Naive thymus-derived CD4-positive, alpha-beta T cell (primary cell): ENCODE measurements at regions of chr6 and their contacts with region 1.

Region 1: DNA sequence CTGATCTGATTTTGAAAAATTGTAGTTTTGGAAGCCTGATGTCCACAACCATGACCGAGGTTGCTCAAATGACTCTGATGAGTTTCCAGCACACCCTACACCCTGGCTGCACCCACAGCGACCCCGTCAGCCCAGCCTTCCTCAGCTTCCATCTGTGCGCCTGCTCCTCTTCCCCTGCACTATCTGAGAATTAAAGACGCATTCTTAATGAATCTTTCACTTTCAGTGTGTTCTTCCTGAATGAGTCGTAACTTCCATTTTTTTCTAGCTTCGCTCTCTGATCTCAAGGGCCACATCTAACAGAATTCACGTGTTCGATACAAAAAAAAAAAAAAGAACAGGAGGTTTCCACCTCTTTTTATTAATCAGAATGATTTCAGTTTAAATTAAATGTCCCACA is 21.3 kb upstream of the RREB1 start:
- DNase-seq: peak in 8 of 9 donors; percentile 10 to 62 (median 56)
- ATAC-seq: peak; percentile 79
- H3K4me3 ChIP-seq: peak overlapping the region; percentile 29
- H3K4me3 Mint-ChIP-seq: peak overlapping the region; percentile 77 to 93 (median 83)
- H3K27ac ChIP-seq: peak overlapping the region; percentile 58
- H3K27ac Mint-ChIP-seq: peak overlapping the region; percentile 62 to 95 (median 89)
- H3K4me1 ChIP-seq: peaks cover 20 to 27% of the 10 kb centered on the region in 2 donors
- H3K4me1 Mint-ChIP-seq: peaks cover 21 to 42% (median 39%) of the 10 kb centered on the region in 7 donors
- H3K27me3 ChIP-seq: no peaks in the 10 kb centered on the region
- H3K27me3 Mint-ChIP-seq: peaks cover 0 to 65% (median 0%) of the 10 kb centered on the region in 5 donors

Region 2: DNA sequence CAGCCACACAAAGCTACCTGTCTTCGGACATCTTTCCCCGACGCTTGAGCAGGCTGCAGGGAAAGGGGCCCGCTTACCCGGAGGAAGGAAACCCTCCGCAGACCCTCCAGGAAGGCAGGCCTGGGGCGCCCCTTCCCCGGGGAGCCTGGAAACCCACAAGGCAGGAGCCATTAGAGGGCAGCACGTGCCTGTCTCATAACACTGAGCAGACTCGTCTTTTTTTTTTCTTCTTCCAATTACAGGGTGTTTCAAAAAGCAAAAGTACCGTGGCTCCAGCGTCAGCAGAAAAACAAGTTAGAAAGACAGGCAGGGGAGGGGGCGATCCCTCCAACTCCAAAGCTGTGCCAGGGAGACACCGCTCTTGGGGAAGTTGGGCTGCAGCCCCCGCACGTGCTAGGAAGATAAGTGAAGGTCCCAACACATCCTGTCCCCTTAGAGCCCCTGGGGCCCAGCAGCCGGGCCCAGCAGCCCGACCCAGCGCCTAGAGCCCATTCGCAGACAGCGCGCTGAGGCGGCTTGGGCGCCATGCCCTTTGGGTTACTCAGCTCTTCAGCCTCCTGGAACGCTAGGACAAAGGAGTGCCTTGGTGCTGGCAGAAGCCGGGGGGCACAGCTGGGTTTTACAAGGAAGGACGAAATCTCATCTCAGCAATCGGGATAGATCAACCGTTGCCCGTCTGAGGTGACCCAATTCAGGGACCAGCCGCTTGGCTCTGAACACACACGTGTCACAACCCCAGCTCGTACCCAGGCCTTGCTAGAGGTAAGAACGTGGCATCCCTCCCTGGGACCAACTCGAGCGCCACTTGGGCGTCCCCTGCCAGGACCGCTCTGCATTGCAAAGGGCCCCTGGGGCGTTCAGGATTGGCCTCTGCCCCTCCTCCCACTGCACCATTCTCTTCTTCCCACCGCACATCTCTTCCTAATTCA is 361.7 kb before region 1 on chr6:
- CTCF ChIA-PET with region 1: interaction called, 5 read pairs
- POLR2A ChIA-PET with region 1: no interaction called
- intact Hi-C with region 1: loop called in 1 of 2 experiments (anchors 1 kb)
- DNase-seq: peak; percentile 33 to 74 (median 62)
- ATAC-seq: peak; percentile 82
- H3K4me3 ChIP-seq: peak overlapping the region; percentile 44
- H3K4me3 Mint-ChIP-seq: peak overlapping the region; percentile 67 to 89 (median 81)
- H3K27ac ChIP-seq: no peak overlapping the region
- H3K27ac Mint-ChIP-seq: peak overlapping the region; percentile 47 to 84 (median 74)
- H3K4me1 ChIP-seq: peaks cover 0 to 5% of the 10 kb centered on the region in 2 donors
- H3K4me1 Mint-ChIP-seq: peaks cover 6 to 28% (median 12%) of the 10 kb centered on the region in 7 donors
- H3K27me3 ChIP-seq: no peaks in the 10 kb centered on the region
- H3K27me3 Mint-ChIP-seq: peaks cover 0 to 43% (median 0%) of the 10 kb centered on the region in 5 donors

Region 3: DNA sequence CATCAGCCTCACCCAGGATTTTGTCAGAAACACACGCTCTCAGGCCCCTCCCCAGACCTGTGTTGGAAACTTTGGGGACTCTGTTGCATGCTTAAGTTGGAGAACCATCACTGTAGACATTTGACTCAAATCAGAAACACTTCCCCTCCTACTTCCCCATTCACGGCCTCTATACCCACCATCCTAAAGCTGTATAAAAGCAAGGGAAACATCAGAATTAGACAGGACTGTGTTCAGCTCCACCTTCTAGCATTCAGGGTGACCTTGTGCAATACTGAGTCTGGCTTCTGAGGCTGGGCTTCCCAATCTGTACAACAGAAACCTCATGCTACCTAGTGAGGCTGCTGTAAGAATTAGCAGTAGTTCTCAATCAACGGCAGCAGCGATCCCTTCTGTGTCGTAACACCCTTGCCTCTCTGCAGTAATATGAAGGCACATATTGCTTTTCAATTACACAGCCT is 245.6 kb before region 1 on chr6:
- CTCF ChIA-PET with region 1: no interaction called
- POLR2A ChIA-PET with region 1: no interaction called
- intact Hi-C with region 1: no loop called
- DNase-seq: no peak
- ATAC-seq: peak; percentile 54
- H3K4me3 ChIP-seq: no peak overlapping the region
- H3K4me3 Mint-ChIP-seq: no peak overlapping the region
- H3K27ac ChIP-seq: no peak overlapping the region
- H3K27ac Mint-ChIP-seq: peak overlapping the region in 1 of 9 donors; percentile 14
- H3K4me1 ChIP-seq: no peaks in the 10 kb centered on the region
- H3K4me1 Mint-ChIP-seq: peaks cover 0 to 11% (median 0%) of the 10 kb centered on the region in 7 donors
- H3K27me3 ChIP-seq: no peaks in the 10 kb centered on the region
- H3K27me3 Mint-ChIP-seq: peaks cover 0 to 61% (median 0%) of the 10 kb centered on the region in 5 donors

Region 4: GRCh38 chr6:7051233-7052114 is 35.0 kb before region 1 on chr6:
- CTCF ChIA-PET with region 1: interaction called, 3 read pairs
- POLR2A ChIA-PET with region 1: interaction called, 23 read pairs
- intact Hi-C with region 1: loop called in 1 of 2 experiments (anchors 1 kb)
- DNase-seq: peak; percentile 34 to 81 (median 70)
- ATAC-seq: peak; percentile 83
- H3K4me3 ChIP-seq: peak overlapping the region; percentile 77
- H3K4me3 Mint-ChIP-seq: peak overlapping the region; percentile 20 to 89 (median 79)
- H3K27ac ChIP-seq: peak overlapping the region; percentile 59
- H3K27ac Mint-ChIP-seq: peak overlapping the region in 6 of 9 donors; percentile 69 to 86 (median 79)
- H3K4me1 ChIP-seq: peaks cover 0 to 4% of the 10 kb centered on the region in 2 donors
- H3K4me1 Mint-ChIP-seq: peaks cover 5 to 18% (median 11%) of the 10 kb centered on the region in 7 donors
- H3K27me3 ChIP-seq: no peaks in the 10 kb centered on the region
- H3K27me3 Mint-ChIP-seq: peaks cover 0 to 66% (median 0%) of the 10 kb centered on the region in 5 donors

Region 5: GRCh38 chr6:7073821-7074525 is 12.5 kb before region 1 on chr6:
- CTCF ChIA-PET with region 1: no interaction called
- POLR2A ChIA-PET with region 1: interaction called, 11 read pairs
- intact Hi-C with region 1: loop called (anchors 1 kb)
- DNase-seq: peak in 8 of 9 donors; percentile 54 to 74 (median 64)
- ATAC-seq: peak; percentile 98
- H3K4me3 ChIP-seq: peak overlapping the region; percentile 2
- H3K4me3 Mint-ChIP-seq: peak overlapping the region; percentile 50 to 88 (median 76)
- H3K27ac ChIP-seq: peak overlapping the region; percentile 44
- H3K27ac Mint-ChIP-seq: peak overlapping the region; percentile 48 to 94 (median 85)
- H3K4me1 ChIP-seq: peaks cover 0 to 4% of the 10 kb centered on the region in 2 donors
- H3K4me1 Mint-ChIP-seq: peaks cover 7 to 17% (median 12%) of the 10 kb centered on the region in 7 donors
- H3K27me3 ChIP-seq: no peaks in the 10 kb centered on the region
- H3K27me3 Mint-ChIP-seq: peaks cover 0 to 72% (median 0%) of the 10 kb centered on the region in 5 donors

Region 6: DNA sequence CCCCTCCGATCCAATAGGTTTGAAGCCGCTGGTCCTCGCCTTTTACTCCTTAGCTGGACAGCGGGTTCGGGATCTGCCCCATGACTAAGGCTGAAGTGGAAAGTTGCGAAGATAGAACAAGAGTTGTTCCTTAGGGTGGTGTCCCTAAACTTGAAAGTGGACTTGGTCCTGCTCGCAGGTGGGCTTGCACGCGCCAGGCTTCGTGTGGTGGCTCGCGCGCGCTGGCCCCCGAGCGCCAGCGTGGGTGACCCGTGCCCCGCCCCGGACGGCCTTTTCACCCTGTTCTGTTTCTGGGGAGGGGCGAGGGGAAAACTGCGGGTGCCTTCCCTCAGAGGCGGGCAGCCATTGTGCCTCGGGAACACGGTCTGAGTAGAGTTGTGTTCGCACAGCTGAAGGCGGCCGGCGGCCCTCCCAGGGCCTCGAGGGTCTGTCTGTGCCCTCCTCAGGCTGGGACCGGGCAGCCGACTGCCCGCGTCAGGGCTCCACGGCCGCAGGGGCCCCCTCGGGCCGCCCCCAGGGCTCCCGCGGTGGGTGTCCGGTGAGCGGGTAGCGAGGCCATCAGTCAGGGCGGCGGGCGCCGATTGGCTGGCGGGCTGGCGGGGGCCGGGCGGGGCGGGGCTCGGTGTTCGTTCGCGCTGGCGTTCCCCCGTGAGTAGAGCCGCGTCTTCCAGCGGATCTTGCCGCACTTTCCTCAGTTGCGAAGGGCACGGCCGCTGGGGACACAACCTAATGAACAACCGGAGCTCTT is 54.3 kb after region 1 on chr6:
- CTCF ChIA-PET with region 1: interaction called, 6 read pairs
- POLR2A ChIA-PET with region 1: interaction called, 5 read pairs
- intact Hi-C with region 1: loop called in 1 of 2 experiments (anchors 2 kb)
- DNase-seq: peak; percentile 69 to 86 (median 78)
- ATAC-seq: peak; percentile 89
- H3K4me3 ChIP-seq: peak overlapping the region; percentile 73
- H3K4me3 Mint-ChIP-seq: peak overlapping the region; percentile 80 to 92 (median 88)
- H3K27ac ChIP-seq: peak overlapping the region; percentile 91
- H3K27ac Mint-ChIP-seq: peak overlapping the region; percentile 85 to 99 (median 96)
- H3K4me1 ChIP-seq: peaks cover 22 to 51% of the 10 kb centered on the region in 2 donors
- H3K4me1 Mint-ChIP-seq: peaks cover 45 to 91% (median 85%) of the 10 kb centered on the region in 7 donors
- H3K27me3 ChIP-seq: no peaks in the 10 kb centered on the region
- H3K27me3 Mint-ChIP-seq: no peaks in the 10 kb centered on the region